ENCODE measurements at regions of chr5 and their contacts with region 1.

Region 1: DNA sequence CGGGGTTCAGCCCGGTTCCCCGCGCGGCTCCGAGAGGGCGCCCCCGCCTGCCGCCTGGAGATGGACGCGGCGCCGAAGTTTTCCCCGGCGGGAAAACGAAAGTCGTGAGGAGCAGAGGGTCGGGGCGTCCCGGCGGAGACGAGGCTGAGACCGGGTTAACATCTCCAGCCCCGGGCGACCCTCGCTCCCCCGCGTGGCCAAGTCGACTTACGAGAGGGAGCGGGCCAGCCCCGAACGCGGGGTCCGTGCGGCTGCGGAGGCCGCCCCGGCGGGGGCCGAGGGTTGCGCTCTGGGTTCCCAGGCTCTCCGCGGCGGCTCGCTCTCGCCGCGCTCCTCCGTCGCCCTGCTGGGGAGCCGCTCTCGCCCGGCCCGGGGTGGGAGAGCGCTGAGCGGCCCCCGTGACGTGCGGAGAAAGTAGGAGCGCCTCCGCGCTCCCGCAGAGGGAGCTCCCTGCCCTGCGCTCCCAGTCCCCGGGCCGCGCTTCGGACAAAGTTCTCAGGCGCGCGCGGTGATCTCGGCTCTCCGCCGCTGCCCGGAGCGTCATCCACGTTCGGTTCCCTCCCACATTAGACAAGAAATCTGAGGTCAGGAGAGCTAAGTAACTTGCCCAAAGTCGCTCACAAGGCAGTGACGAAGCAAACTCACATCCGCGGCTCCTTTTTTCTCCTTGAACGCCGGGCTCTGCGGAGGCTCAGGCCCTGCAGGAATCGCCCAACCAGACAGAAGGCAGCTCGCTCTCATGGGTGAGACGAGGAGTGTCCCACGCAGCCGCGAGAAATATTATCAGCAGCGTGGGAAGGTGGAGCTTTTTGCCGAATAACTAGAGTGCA is 1.2 kb upstream of the GCNT4 start:
- DNase-seq: peak; percentile 16
- ATAC-seq: peak; percentile 75
- H3K4me3 ChIP-seq: peak overlapping the region; percentile 54 to 75 (median 68)
- H3K27ac ChIP-seq: no peak overlapping the region
- H3K4me1 ChIP-seq: peaks cover 27% of the 10 kb centered on the region
- H3K27me3 ChIP-seq: peaks cover 19 to 53% of the 10 kb centered on the region in 2 experiments
- CTCF ChIP-seq: peak; percentile 44
- EP300 ChIP-seq: no peak
- POLR2A ChIP-seq: no peak
- RAD21 ChIP-seq: peak; percentile 27; the same call in 1 of the 2 replicates

Region 2: DNA sequence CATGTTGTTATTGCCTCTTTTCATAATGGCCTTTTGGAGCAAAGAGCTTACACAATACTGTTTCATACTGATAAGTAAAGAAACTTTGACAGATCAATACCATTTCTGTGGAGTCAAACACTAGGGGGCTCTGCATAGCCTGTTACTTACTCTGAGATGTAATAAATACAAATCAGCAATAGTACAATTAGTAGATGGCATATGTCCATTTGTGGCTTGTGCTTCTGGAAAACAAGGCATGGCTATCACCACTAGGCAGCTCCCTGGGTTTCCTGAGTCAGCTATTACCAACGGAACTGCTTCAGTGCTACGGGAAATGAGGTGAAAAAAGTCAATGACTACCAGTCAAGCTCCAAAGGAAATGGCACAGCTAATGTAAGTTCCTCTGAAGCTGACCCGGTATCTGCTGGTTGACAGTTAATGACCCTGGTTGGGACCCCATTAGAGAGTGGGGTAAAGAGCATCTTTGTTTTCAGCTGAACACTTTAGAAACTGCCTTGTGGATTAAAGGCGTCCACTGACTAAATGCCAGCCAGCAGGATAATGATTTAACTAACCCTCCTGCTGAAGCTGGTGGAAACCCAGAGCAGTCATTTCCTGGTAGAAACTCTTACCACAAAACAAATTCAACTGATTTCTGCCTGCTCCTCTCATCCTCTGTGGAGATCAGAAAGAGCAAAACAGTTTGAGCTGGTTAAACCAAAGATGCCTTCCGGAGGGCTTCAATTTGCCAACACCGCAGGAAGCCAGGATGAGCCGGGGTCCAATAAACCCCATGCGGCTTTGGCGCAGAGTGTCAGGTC is 118.4 kb before region 1 on chr5:
- CTCF ChIA-PET with region 1: interaction called, 3 read pairs
- POLR2A ChIA-PET with region 1: no interaction called
- in situ Hi-C with region 1: loop called (anchors 10 kb)
- intact Hi-C with region 1: no loop called
- DNase-seq: peak; percentile 46
- ATAC-seq: peak; percentile 72
- H3K4me3 ChIP-seq: no peak overlapping the region; a peak in 1 of 6 replicates
- H3K27ac ChIP-seq: no peak overlapping the region
- H3K4me1 ChIP-seq: peaks cover 12% of the 10 kb centered on the region
- H3K27me3 ChIP-seq: 0 out of 5 replicates have a peak, but pooled peaks cover 0 to 7% of the 10 kb centered on the region in 2 experiments
- CTCF ChIP-seq: peak; percentile 54
- EP300 ChIP-seq: no peak
- POLR2A ChIP-seq: no peak
- RAD21 ChIP-seq: 0 out of 2 replicates have a peak, but pooled peaks have one; percentile 27

Region 3: GRCh38 chr5:74945561-74946165 is 107.9 kb before region 1 on chr5:
- CTCF ChIA-PET with region 1: no interaction called
- POLR2A ChIA-PET with region 1: no interaction called
- in situ Hi-C with region 1: no loop called
- intact Hi-C with region 1: loop called (anchors 5 kb)
- DNase-seq: no peak
- ATAC-seq: no peak
- H3K4me3 ChIP-seq: no peak overlapping the region
- H3K27ac ChIP-seq: no peak overlapping the region
- H3K4me1 ChIP-seq: peaks cover 65% of the 10 kb centered on the region
- H3K27me3 ChIP-seq: no peaks in the 10 kb centered on the region
- CTCF ChIP-seq: no peak
- EP300 ChIP-seq: no peak
- POLR2A ChIP-seq: no peak
- RAD21 ChIP-seq: no peak

Region 4: DNA sequence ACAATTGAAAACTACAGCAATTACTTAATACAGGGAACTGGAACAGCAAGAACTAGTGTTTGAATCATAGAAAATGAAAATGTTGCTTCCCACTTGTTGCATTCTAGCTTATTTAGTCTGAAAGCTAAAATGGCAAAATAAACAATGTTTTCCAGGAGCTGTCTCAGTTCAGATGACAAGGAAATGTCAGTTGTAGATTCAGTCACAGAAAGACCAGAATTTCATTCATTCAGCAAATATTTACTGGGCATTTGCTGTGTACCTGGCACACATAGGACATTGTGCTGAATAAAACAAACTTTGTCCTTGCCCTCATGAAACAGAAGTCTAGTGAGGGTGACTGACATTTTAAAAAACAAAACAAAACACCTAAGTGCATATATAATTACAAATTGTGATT is 42.7 kb before region 1 on chr5:
- CTCF ChIA-PET with region 1: no interaction called
- POLR2A ChIA-PET with region 1: no interaction called
- in situ Hi-C with region 1: no loop called
- intact Hi-C with region 1: loop called (anchors 1 kb)
- DNase-seq: peak; percentile 63
- ATAC-seq: peak; percentile 74
- H3K4me3 ChIP-seq: no peak overlapping the region
- H3K27ac ChIP-seq: no peak overlapping the region
- H3K4me1 ChIP-seq: peaks cover 23% of the 10 kb centered on the region
- H3K27me3 ChIP-seq: no peaks in the 10 kb centered on the region
- CTCF ChIP-seq: no peak
- EP300 ChIP-seq: peak in 1 of 2 experiments; percentile 56; a peak in 2 of 4 replicates
- POLR2A ChIP-seq: no peak
- RAD21 ChIP-seq: no peak

Region 5: DNA sequence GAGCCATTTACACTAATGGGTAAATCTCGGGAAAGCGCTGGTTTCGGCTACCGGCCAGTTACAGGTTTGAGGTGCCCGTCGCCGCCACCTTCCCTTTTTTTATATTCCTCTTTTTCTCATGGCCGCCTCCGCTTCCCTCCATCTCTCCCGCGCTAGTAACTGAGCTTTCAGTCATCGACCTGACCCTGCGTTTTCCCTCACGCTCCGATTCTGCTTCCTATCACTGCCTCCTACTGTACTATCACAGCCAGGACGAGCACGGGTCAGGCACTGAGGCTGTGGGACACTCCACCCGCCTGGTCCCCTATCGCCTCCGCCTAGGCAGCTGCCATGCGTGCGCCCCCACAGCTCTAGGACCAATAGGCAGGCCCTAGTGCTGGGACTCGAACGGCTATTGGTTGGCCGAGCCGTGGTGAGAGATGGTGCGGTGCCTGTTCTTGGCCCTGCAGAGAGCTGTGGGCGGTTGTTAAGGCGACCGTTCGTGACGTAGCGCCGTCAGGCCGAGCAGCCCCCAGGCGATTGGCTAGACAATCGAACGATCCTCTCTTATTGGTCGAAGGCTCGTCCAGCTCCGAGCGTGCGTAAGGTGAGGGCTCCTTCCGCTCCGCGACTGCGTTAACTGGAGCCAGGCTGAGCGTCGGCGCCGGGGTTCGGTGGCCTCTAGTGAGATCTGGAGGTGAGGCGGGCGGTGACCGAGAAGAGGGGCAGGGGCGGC is 283.3 kb after region 1 on chr5 and contains the start of gene HMGCR:
- CTCF ChIA-PET with region 1: no interaction called
- POLR2A ChIA-PET with region 1: interaction called, 3 read pairs
- in situ Hi-C with region 1: no loop called
- intact Hi-C with region 1: loop called (anchors 2 kb)
- DNase-seq: peak; percentile 99
- ATAC-seq: peak; percentile 97
- H3K4me3 ChIP-seq: peak within 1 kb of the TSS; percentile 90 to 98 (median 96)
- H3K27ac ChIP-seq: peak within 1 kb of the TSS; percentile 92
- H3K4me1 ChIP-seq: peaks cover 53% of the 10 kb centered on the region
- H3K27me3 ChIP-seq: no peaks in the 10 kb centered on the region; a peak in 1 of 5 replicates
- CTCF ChIP-seq: peak; percentile 89
- EP300 ChIP-seq: peak; percentile 46 to 72; a peak in 3 of 4 replicates
- POLR2A ChIP-seq: peak; percentile 94 to 96
- RAD21 ChIP-seq: peak; percentile 83
- total RNA-seq, gene HMGCR: 111 and 144 TPM in 2 replicates